ENCODE measurements at regions of chr2 and their contacts with region 1.

Region 1: DNA sequence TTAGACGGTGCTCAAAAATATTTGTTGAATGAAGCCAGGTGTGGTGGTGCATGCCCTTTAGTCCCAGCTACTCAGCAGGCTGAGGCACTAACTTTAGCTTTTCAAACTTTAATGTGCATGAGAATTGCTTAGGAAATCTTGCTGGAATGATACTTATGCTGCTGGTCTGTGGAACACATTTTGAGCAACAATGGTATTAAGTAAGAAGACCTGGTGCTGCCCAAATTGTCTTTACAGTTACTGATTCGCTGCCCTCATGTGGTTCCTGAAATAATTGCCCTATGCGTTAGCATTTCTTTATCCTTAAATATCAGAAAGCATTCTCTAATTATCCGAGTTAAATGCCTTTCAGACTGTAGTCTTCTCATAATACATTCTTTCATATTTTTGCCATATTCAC is 76.0 kb upstream of the SESTD1 start:
- DNase-seq: no peak
- H3K4me3 Mint-ChIP-seq: no peak overlapping the region
- H3K27ac Mint-ChIP-seq: no peak overlapping the region
- H3K4me1 Mint-ChIP-seq: no peaks in the 10 kb centered on the region
- H3K27me3 Mint-ChIP-seq: no peaks in the 10 kb centered on the region

Region 2: GRCh38 chr2:179218848-179219594 is 121.6 kb before region 1 on chr2:
- intact Hi-C with region 1: loop called (anchors 1 kb)
- DNase-seq: peak; percentile 85
- H3K4me3 Mint-ChIP-seq: no peak overlapping the region
- H3K27ac Mint-ChIP-seq: no peak overlapping the region
- H3K4me1 Mint-ChIP-seq: no peaks in the 10 kb centered on the region
- H3K27me3 Mint-ChIP-seq: peaks cover 2% of the 10 kb centered on the region

Region 3: GRCh38 chr2:179239195-179239594 is 101.5 kb before region 1 on chr2:
- intact Hi-C with region 1: no loop called
- DNase-seq: peak; percentile 71
- H3K4me3 Mint-ChIP-seq: peak overlapping the region; percentile 36
- H3K27ac Mint-ChIP-seq: peak overlapping the region; percentile 47
- H3K4me1 Mint-ChIP-seq: peaks cover 34% of the 10 kb centered on the region
- H3K27me3 Mint-ChIP-seq: no peaks in the 10 kb centered on the region